ENCODE measurements at regions of chr19 and their contacts with region 1.

Region 1: DNA sequence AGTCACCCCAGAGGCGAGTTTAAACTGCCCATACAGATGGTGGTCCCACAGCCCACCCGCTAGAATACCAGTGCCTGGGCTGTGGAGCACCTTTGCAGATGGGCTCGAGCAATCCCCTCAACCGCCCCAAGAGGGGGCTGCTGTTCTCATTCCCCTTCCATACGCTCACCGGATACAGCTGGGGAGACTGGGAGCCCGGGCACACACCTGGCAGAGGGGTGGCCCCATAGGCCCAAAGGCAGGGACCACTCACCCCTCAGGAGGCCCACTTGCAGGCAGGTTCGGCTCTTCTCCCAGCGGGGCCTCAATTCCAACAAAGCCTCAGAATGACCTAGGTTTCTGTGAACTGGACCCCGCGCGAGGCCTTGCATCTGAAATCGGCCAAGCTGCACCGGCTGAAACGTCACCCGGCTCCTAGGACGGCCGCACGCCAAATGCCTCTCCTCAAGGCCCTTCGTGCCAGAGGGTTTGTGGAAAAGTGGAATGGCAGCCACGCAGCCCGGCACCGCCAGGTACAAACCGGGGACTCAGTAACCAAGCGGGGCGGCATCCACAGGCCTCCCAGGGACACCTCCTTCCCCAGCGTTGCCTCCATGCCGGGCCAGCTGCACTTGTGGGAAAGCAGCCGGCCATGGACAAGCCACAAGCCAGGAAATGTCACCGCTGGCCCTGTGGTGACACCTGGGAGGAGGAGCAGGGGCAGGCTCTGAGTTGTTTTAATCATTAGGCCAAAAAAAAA is 18.7 kb downstream of the MLLT1 start:
- DNase-seq: peak; percentile 81
- ATAC-seq: peak; percentile 97
- H3K4me3 Mint-ChIP-seq: no peak overlapping the region
- H3K27ac Mint-ChIP-seq: no peak overlapping the region
- H3K4me1 Mint-ChIP-seq: peaks cover 16% of the 10 kb centered on the region
- H3K27me3 Mint-ChIP-seq: no peaks in the 10 kb centered on the region
- CTCF ChIP-seq: peak; percentile 57

Region 2: DNA sequence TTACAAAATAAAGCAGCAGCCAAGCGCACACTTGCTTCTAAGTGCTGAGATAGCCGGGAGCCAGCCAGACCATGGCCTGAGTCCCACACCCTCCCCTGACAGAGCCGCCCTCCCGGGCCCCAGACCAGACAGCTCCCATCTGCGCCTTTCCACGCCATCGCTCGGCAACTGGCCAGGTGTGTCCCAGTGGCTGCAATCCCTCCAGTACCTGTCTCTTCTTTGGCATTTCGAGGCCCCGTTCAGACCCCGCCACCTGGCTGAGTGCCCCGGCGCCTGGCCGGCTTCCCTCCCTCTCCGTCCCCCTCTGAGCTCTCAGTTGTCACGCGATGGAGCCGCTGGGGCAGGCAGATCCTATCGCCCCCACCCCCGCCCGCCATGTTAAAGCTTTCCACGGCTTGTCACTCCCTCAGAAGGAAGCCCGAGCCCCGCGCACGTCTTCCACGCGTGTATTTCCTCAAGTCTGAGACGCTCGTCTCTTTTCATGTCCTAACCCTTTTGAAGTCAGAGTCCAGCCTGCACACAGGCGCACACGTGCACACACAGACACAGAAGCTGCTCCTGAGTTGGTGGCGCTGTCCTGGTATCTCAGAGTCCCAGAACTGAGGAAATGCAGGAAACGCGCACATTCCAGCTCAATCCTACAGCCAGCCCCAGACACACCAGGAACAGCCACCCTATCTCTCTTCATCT is 10.8 kb after region 1 on chr19:
- CTCF ChIA-PET with region 1: interaction called, 36 read pairs
- POLR2A ChIA-PET with region 1: no interaction called
- DNase-seq: peak; percentile 24
- ATAC-seq: peak; percentile 25
- H3K4me3 Mint-ChIP-seq: peak overlapping the region; percentile 19
- H3K27ac Mint-ChIP-seq: peak overlapping the region; percentile 98
- H3K4me1 Mint-ChIP-seq: peaks cover 57% of the 10 kb centered on the region
- H3K27me3 Mint-ChIP-seq: no peaks in the 10 kb centered on the region
- CTCF ChIP-seq: no peak

Region 3: DNA sequence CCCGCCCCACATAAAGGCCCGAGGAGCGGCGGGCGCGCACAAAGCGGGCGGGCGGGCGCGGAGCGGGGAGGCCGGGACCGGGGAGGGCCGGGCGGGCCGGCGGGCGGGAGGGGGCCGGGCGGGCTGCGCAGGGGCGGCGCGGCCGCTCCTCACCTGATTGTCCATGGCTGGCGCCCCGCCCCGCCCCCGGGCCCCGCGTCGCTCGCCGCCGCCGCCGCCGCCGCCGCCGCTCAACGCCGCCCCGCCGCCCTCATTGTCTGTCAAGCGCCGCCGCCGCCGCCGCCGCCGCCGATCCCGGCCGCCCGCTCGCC is 18.5 kb after region 1 on chr19:
- CTCF ChIA-PET with region 1: interaction called, 15 read pairs
- POLR2A ChIA-PET with region 1: no interaction called
- DNase-seq: no peak
- ATAC-seq: peak; percentile 23
- H3K4me3 Mint-ChIP-seq: no peak overlapping the region
- H3K27ac Mint-ChIP-seq: no peak overlapping the region
- H3K4me1 Mint-ChIP-seq: peaks cover 41% of the 10 kb centered on the region
- H3K27me3 Mint-ChIP-seq: peaks cover 19% of the 10 kb centered on the region
- CTCF ChIP-seq: no peak

Region 4: DNA sequence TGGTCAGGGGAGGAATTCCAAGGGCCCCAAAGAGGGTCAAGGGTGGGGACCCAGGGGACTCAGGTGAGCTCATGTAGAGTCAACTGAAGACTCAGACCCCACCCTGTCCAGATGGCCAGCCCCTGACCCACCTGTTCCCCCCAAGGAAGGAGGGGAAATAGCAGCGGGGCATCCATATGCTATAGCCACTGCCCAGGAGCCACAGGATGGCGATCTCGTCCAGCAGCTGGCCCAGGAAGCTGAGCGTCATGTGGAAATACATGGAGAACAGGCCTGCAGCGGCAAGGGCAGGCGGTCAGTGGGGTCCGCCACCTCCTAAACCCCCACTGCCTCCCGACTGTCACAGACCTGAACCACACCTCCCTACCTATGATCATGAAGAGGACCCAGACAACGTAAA is 50.9 kb after region 1 on chr19:
- CTCF ChIA-PET with region 1: no interaction called
- POLR2A ChIA-PET with region 1: no interaction called
- DNase-seq: peak; percentile 17
- ATAC-seq: no peak
- H3K4me3 Mint-ChIP-seq: no peak overlapping the region
- H3K27ac Mint-ChIP-seq: no peak overlapping the region
- H3K4me1 Mint-ChIP-seq: no peaks in the 10 kb centered on the region
- H3K27me3 Mint-ChIP-seq: peaks cover 22% of the 10 kb centered on the region
- CTCF ChIP-seq: no peak

Region 5: DNA sequence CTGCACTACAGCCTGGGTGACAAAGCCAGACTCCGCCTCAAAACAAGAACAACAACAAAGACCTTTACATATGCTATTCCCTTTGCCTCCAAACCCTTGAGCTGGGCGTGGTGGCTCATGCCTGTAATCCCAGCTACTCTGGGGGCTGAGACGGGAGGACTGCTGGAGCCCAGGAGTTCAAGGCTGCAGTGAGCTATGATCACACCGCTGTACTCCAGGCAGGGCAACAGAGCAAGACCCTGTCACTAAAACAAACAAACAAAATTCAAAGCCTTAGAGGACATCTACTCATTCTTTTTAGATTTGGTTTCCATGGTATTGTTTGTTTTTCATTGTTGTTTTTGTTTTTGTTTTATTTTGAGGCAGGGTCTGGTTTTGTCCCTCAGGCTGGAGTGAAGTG is 64.5 kb after region 1 on chr19:
- CTCF ChIA-PET with region 1: no interaction called
- POLR2A ChIA-PET with region 1: no interaction called
- DNase-seq: no peak
- ATAC-seq: no peak
- H3K4me3 Mint-ChIP-seq: no peak overlapping the region
- H3K27ac Mint-ChIP-seq: no peak overlapping the region
- H3K4me1 Mint-ChIP-seq: no peaks in the 10 kb centered on the region
- H3K27me3 Mint-ChIP-seq: peaks cover 14% of the 10 kb centered on the region
- CTCF ChIP-seq: no peak